Breast epithelium (tissue), 4 donors: ENCODE measurements at regions of chr1 and their contacts with region 1.

Region 1: GRCh38 chr1:79037085-79037484 is 30.6 kb upstream of the ADGRL4 start:
- DNase-seq: no peak
- H3K4me3 ChIP-seq: no peak overlapping the region
- H3K27ac ChIP-seq: no peak overlapping the region
- H3K4me1 ChIP-seq: no peaks in the 10 kb centered on the region
- H3K27me3 ChIP-seq: no peaks in the 10 kb centered on the region
- CTCF ChIP-seq: no peak
- POLR2A ChIP-seq: no peak

Region 2: GRCh38 chr1:80170811-80171485 is 1133.9 kb after region 1 on chr1:
- intact Hi-C with region 1: loop called (anchors 5 kb)
- DNase-seq: no peak
- H3K4me3 ChIP-seq: no peak overlapping the region
- H3K27ac ChIP-seq: no peak overlapping the region
- H3K4me1 ChIP-seq: no peaks in the 10 kb centered on the region
- H3K27me3 ChIP-seq: no peaks in the 10 kb centered on the region
- CTCF ChIP-seq: no peak
- POLR2A ChIP-seq: no peak